Gastrocnemius medialis (tissue), 4 donors: ENCODE measurements at regions of chr4 and their contacts with region 1.

Region 1: DNA sequence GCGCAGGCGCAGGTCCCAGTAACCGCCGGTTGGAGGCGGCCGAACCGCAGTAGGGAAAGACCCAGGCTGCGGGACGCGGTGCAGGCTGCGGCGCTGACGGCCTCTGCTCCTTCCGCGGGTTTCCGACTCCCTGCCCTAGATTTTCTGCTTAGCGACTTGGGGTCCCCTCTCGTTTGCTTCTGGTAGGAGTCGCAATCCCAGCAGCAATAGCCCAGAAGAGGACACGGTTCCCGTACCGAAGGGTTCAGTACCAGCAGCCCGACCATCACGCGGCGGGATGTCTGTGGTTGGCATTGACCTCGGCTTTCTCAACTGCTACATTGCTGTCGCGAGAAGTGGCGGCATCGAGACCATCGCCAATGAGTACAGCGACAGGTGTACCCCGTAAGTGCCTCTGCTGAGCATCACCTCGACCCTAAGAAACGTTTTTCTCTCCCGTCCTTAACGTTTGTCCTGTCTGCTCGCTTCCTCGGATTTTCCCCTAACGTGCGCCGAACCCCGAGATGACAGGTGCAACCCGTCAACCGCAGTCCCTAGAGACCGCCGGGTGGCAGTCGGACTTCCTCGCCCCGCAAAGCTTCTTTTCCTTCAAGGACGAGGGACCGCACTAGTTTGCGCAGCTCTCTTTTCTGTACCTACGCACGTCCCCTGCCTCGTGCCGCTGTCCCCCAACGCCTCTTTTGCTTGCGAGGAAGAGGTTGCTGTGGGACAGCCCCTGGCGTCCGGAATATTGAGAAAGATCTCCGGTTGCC is at the start of gene HSPA4L:
- DNase-seq: peak; percentile 46 to 74
- ATAC-seq: peak; percentile 85 to 91
- H3K4me3 ChIP-seq: peak within 1 kb of the TSS; percentile 68 to 96 (median 80)
- H3K27ac ChIP-seq: peak within 1 kb of the TSS; percentile 67 to 80 (median 78)
- H3K4me1 ChIP-seq: peaks cover 0 to 10% of the 10 kb centered on the region in 2 donors
- H3K27me3 ChIP-seq: no peaks in the 10 kb centered on the region
- CTCF ChIP-seq: peak; percentile 22 to 34 (median 31)
- POLR2A ChIP-seq: peak; percentile 36 to 73
- total RNA-seq, gene HSPA4L: 0.36 to 1.2 (median 0.74) TPM

Region 2: GRCh38 chr4:127632420-127633403 is 149.7 kb before region 1 on chr4 and contains the start of gene INTU:
- in situ Hi-C with region 1: no loop called
- intact Hi-C with region 1: loop called (anchors 5 kb)
- DNase-seq: peak; percentile 89 to 91
- ATAC-seq: peak; percentile 100
- H3K4me3 ChIP-seq: peak within 1 kb of the TSS; percentile 62 to 94 (median 76)
- H3K27ac ChIP-seq: peak within 1 kb of the TSS in 2 of 4 donors; percentile 34 to 58
- H3K4me1 ChIP-seq: peaks cover 12 to 18% of the 10 kb centered on the region in 2 donors
- H3K27me3 ChIP-seq: no peaks in the 10 kb centered on the region
- CTCF ChIP-seq: no peak
- POLR2A ChIP-seq: no peak
- total RNA-seq, gene INTU: 0.65 to 2.6 (median 1.7) TPM

Region 3: DNA sequence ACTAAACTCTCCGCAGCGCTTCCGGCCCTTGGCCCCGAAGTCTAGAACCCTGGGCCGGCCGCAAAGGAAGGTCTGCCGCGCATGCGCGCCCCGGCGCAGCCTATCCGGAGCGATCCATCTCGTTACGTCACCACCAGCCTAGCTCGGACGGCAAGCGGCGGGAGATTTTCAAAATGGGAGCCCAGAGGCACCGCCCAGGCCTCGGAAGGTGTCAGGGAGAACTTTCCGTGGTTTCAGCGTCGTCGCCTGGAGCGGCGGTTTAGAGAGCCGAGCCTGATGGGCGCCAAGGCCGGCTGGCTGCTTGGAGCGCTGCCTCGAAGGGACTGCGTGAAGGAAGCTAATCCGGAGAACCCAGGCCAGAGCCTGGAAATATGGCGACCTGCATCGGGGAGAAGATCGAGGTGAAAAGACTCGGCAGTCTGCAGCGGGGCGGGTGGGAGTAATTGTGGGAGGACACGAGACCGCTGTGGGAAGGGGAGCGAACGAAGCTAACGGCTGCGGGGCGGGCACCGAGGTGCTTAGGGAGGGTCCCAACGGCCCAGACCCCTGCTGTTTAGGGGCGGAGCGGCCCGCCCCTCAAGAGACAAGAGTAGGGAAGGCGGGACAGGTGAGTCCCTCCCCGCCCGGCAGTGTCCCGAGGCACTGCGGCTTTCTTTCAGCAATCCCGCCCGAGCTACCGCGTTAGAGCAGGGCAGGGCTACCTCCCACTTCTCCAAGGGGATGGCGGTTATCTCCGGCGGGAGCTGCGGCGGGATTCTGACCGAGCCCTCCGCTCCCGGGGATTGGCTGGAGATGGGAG is 98.5 kb after region 1 on chr4 and contains the start of gene PLK4:
- in situ Hi-C with region 1: loop called in 1 of 4 experiments (anchors 10 kb)
- intact Hi-C with region 1: loop called (anchors 2 kb)
- DNase-seq: peak; percentile 79 to 83
- ATAC-seq: peak; percentile 96 to 98
- H3K4me3 ChIP-seq: peak within 1 kb of the TSS; percentile 63 to 83 (median 74)
- H3K27ac ChIP-seq: peak within 1 kb of the TSS; percentile 6 to 65 (median 59)
- H3K4me1 ChIP-seq: peaks cover 7 to 10% of the 10 kb centered on the region in 2 donors
- H3K27me3 ChIP-seq: no peaks in the 10 kb centered on the region
- CTCF ChIP-seq: no peak
- POLR2A ChIP-seq: peak in 1 of 2 donors; percentile 4
- total RNA-seq, gene PLK4: 0.11 to 0.98 TPM in 2 of 4 donors, not detected in the others

Region 4: GRCh38 chr4:128060699-128061565 is 278.5 kb after region 1 on chr4 and contains the start of gene LARP1B:
- in situ Hi-C with region 1: no loop called
- intact Hi-C with region 1: loop called (anchors 5 kb)
- DNase-seq: peak; percentile 94
- ATAC-seq: peak; percentile 88 to 91
- H3K4me3 ChIP-seq: peak within 1 kb of the TSS; percentile 55 to 95 (median 65)
- H3K27ac ChIP-seq: peak within 1 kb of the TSS; percentile 92 to 99 (median 94)
- H3K4me1 ChIP-seq: peaks cover 10 to 12% of the 10 kb centered on the region in 2 donors
- H3K27me3 ChIP-seq: no peaks in the 10 kb centered on the region
- CTCF ChIP-seq: peak in 1 of 5 experiments; percentile 9
- POLR2A ChIP-seq: peak; percentile 92 to 94
- total RNA-seq, gene LARP1B: 19.5 to 23.5 (median 22.8) TPM